ENCODE measurements at regions of chr2 and their contacts with region 1.

Region 1: DNA sequence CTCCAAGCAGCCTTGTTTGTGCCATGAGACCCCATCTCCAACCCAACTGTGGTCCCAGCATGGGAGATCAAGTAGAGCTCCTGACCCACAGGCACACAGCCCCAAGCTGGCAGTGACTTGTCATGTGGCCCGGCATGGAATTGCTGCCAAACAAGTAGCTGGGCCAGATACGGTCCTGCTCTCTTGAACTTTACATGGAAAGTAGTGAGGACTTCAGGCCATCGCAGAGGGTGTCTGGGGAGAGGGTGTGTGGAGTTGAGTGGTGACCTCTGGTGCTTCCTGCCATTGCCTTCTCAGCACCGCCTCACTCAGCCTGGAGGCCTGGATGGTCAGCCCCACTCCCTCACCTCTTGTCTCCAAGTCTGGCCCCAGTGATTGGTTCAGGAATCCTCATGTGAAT is 10.9 kb upstream of the SLC4A3 start:
- DNase-seq: no peak

Region 2: DNA sequence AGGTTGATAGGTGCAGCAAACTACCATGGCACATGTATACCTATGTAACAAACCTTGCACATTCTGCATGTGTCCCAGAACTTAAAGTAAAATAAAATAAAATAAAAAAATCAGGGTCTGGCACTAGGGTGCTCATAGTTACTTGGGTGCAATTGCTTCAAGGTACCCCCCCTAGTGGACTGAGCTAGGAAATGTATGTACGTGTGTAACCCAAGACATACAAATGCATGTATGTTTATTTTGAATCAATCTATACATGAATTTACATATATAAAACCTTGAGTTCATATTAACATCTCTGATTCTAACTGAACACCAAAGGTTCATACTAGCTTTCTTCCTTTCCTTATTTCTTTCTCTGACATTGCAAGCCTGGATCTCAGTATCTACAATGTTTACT is 1099.9 kb before region 1 on chr2:
- intact Hi-C with region 1: no loop called
- DNase-seq: no peak

Region 3: DNA sequence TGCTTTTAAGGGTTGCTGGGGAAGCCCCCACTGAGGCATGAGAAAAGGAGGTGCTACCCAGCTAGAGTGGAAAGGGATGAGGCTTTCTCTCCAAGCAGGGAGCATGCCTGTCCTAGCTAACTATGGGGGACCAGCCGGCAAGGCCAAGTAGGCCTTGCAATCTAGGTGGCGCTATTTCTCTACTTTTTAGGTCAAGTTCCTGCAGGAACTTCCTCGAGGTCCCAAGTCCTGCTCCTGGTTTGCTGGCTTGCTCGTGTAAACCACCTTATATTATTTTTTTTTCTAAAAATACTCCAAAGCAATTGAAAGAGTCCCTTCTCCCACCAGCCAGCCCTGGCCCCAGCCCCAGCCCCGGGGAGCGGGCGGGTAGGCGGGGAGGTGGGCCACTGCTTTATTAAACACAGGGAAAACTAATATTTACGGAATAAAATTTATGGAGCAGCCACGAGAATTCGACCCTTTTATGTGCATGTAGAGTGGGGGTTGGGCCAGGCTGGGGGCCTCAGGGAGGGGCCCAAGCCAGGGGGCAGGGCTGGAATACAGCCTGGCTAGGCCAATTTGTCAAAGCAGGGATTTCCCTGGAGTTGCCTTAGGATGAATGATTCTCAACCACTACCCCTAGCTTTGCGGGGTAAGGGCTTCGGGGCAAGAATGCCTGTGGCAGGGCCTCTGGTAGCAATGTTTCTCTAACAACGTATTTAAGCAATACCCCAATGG is 543.0 kb before region 1 on chr2:
- intact Hi-C with region 1: no loop called
- DNase-seq: no peak

Region 4: GRCh38 chr2:219633276-219634065 is 16.9 kb after region 1 on chr2:
- intact Hi-C with region 1: loop called (anchors 1 kb)
- DNase-seq: no peak

Measured in cardiac septum (tissue), 1 donor.